ENCODE measurements at regions of chr22 and their contacts with region 1.

Region 1: GRCh38 chr22:25172153-25172552 is 27.5 kb upstream of the CRYBB3 start:
- DNase-seq: no peak
- ATAC-seq: peak; percentile 14 to 46 (median 28)
- H3K4me3 ChIP-seq: no peak overlapping the region
- H3K27ac ChIP-seq: no peak overlapping the region
- H3K4me1 ChIP-seq: peaks cover 0 to 43% (median 16%) of the 10 kb centered on the region in 4 donors
- H3K27me3 ChIP-seq: no peaks in the 10 kb centered on the region
- CTCF ChIP-seq: peak; percentile 50 to 65 (median 54)
- POLR2A ChIP-seq: no peak

Region 2: GRCh38 chr22:25057013-25057881 is 114.9 kb before region 1 on chr22:
- intact Hi-C with region 1: no loop called
- DNase-seq: peak; percentile 69 to 76 (median 71)
- ATAC-seq: peak; percentile 88 to 94 (median 90)
- H3K4me3 ChIP-seq: no peak overlapping the region
- H3K27ac ChIP-seq: no peak overlapping the region
- H3K4me1 ChIP-seq: peaks cover 0 to 4% (median 1%) of the 10 kb centered on the region in 4 donors
- H3K27me3 ChIP-seq: no peaks in the 10 kb centered on the region
- CTCF ChIP-seq: peak; percentile 76 to 92 (median 84)
- POLR2A ChIP-seq: no peak

Region 3: DNA sequence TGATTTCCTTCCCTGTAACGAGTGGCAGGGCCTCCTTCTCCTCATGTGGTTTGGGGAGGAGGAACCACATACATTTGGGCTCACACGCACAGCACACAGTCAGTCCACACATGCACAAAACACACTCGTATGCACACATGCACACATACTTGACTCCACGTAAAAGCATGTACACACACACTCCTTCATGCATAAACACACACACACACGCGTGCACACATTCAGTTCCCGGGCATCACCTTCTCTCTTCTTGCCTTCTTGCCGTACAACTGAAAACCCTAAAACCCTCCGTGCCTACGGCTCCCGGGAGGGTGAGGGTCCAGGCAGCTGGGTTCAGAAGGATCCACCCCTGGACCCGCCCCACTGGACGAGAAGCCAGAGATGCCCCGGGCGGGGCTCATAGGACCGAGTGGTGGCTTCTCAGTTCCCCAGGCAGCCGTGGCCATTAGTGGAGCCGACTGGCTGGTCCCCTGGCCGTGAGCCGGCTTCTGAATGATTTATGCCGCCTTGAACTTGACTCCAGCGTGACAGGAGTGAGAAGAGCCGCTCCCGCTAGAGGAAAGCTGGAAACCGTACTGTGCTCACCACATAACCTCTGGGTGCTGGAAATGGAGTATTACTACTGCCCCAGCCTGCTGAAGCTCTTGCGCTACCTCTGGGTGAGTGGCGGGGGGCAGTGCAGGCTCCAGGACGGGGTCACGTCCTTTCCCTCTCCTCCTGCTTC is 102.2 kb before region 1 on chr22:
- intact Hi-C with region 1: loop called in 1 of 2 experiments (anchors 10 kb)
- DNase-seq: no peak
- ATAC-seq: peak; percentile 27 to 45 (median 39)
- H3K4me3 ChIP-seq: peak overlapping the region in 1 of 3 donors; percentile 14
- H3K27ac ChIP-seq: no peak overlapping the region
- H3K4me1 ChIP-seq: no peaks in the 10 kb centered on the region
- H3K27me3 ChIP-seq: no peaks in the 10 kb centered on the region
- CTCF ChIP-seq: no peak
- POLR2A ChIP-seq: no peak

Region 4: GRCh38 chr22:25091458-25091857 is 80.7 kb before region 1 on chr22:
- intact Hi-C with region 1: loop called in 1 of 2 experiments (anchors 10 kb)
- DNase-seq: no peak
- ATAC-seq: no peak
- H3K4me3 ChIP-seq: no peak overlapping the region
- H3K27ac ChIP-seq: no peak overlapping the region
- H3K4me1 ChIP-seq: peaks cover 0 to 5% (median under 1%) of the 10 kb centered on the region in 4 donors
- H3K27me3 ChIP-seq: no peaks in the 10 kb centered on the region
- CTCF ChIP-seq: no peak
- POLR2A ChIP-seq: no peak

Region 5: DNA sequence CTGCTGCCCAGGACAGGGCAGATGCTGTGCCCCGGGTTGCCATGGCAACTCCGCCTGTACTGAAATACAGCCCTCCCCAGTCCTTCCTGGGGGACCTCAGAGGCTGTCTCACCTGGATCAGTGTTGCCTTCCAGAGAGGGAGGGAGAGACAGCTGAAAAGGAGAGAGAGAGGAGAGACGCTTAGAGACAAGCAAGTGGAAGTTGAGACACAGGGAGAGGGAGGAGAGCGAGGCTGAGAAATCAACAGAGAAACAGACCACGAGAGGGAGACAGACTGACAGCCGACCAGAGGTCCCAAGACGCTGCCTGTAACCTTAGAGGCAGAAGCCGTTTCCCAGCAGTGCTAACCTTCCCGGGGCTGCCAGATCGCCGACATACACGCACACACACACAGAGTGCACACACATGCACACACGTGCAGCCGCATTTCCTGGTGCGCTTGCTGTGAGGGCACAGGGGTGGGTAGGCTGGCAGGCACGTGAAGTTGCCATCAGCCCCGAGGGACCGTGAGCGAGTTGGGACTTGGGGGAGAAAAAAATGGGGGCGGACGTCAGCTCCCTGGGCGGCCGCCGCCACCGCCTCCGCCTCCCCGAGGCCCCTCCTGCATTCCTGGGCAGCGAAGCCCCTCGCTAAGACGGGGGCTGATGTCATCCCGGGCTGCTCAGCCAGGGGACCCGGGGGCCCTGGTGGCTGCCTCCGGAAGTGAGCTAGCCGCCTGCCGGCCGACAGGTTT is 61.1 kb before region 1 on chr22:
- intact Hi-C with region 1: loop called in 1 of 2 experiments (anchors 5 kb)
- DNase-seq: peak; percentile 87 to 93 (median 92)
- ATAC-seq: peak; percentile 58 to 79 (median 72)
- H3K4me3 ChIP-seq: peak overlapping the region; percentile 50 to 91 (median 79)
- H3K27ac ChIP-seq: peak overlapping the region; percentile 65 to 97 (median 90)
- H3K4me1 ChIP-seq: peaks cover 0 to 34% (median 0%) of the 10 kb centered on the region in 4 donors
- H3K27me3 ChIP-seq: no peaks in the 10 kb centered on the region
- CTCF ChIP-seq: peak; percentile 45 to 54 (median 48)
- POLR2A ChIP-seq: peak; percentile 44

Measured in right lobe of liver (tissue), 6 donors.